ENCODE measurements at regions of chr5 and their contacts with region 1.

Region 1: GRCh38 chr5:96601811-96602244 is 60.3 kb upstream of the CAST start:
- DNase-seq: peak; percentile 84
- ATAC-seq: peak; percentile 72
- H3K4me3 ChIP-seq: no peak overlapping the region
- H3K27ac ChIP-seq: no peak overlapping the region
- H3K4me1 ChIP-seq: peaks cover 9% of the 10 kb centered on the region
- H3K27me3 ChIP-seq: no peaks in the 10 kb centered on the region
- CTCF ChIP-seq: peak; percentile 75

Region 2: GRCh38 chr5:95858661-95859326 is 743.0 kb before region 1 on chr5:
- CTCF ChIA-PET with region 1: interaction called, 6 read pairs
- POLR2A ChIA-PET with region 1: no interaction called
- intact Hi-C with region 1: loop called (anchors 5 kb)
- DNase-seq: peak; percentile 93
- ATAC-seq: peak; percentile 68
- H3K4me3 ChIP-seq: peak overlapping the region; percentile 56
- H3K27ac ChIP-seq: peak overlapping the region; percentile 99
- H3K4me1 ChIP-seq: peaks cover 49% of the 10 kb centered on the region
- H3K27me3 ChIP-seq: no peaks in the 10 kb centered on the region
- CTCF ChIP-seq: peak; percentile 91

Region 3: GRCh38 chr5:96434201-96434645 is 167.6 kb before region 1 on chr5:
- CTCF ChIA-PET with region 1: no interaction called
- POLR2A ChIA-PET with region 1: no interaction called
- intact Hi-C with region 1: no loop called
- DNase-seq: peak; percentile 63
- ATAC-seq: peak; percentile 57
- H3K4me3 ChIP-seq: no peak overlapping the region
- H3K27ac ChIP-seq: no peak overlapping the region
- H3K4me1 ChIP-seq: no peaks in the 10 kb centered on the region
- H3K27me3 ChIP-seq: no peaks in the 10 kb centered on the region
- CTCF ChIP-seq: 0 out of 2 replicates have a peak, but pooled peaks have one; percentile 14

Region 4: DNA sequence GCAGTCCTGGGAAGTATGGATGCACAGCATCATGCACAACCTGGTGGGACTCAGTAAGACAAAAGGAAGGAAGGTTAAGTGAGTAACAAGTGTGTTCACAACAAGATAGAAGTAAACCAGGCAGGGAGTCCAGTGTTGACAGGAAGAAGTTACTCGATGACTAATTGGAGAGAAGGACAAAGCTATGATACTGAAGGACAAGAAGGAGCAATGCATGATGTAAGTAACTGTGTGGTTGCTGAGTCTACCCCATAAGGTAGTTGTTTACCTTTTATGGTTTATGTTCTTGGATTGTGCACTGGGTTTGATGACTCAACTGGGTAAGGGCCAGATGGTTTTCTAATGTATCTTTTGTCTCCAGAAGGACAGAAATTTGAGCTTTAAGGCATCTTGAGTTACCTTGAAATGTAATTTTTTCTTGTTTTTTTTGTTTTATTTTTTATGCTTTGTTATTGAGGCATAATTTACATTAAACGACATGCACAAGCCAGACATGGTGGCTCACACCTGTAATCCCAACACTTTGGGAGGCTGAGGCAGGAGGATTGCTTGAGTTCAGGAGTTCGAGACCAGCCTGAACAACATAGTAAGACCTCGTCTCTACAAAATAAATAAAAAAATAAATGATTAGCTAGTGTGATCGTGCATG is 28.8 kb before region 1 on chr5:
- CTCF ChIA-PET with region 1: no interaction called
- POLR2A ChIA-PET with region 1: no interaction called
- intact Hi-C with region 1: no loop called
- DNase-seq: peak; percentile 93
- ATAC-seq: peak; percentile 100
- H3K4me3 ChIP-seq: no peak overlapping the region
- H3K27ac ChIP-seq: peak overlapping the region; percentile 80
- H3K4me1 ChIP-seq: peaks cover 11% of the 10 kb centered on the region
- H3K27me3 ChIP-seq: no peaks in the 10 kb centered on the region
- CTCF ChIP-seq: no peak

Region 5: GRCh38 chr5:97094579-97095317 is 492.9 kb after region 1 on chr5:
- CTCF ChIA-PET with region 1: no interaction called
- POLR2A ChIA-PET with region 1: no interaction called
- intact Hi-C with region 1: no loop called
- DNase-seq: no peak
- ATAC-seq: no peak
- H3K4me3 ChIP-seq: no peak overlapping the region
- H3K27ac ChIP-seq: no peak overlapping the region
- H3K4me1 ChIP-seq: no peaks in the 10 kb centered on the region
- H3K27me3 ChIP-seq: peaks cover 27% of the 10 kb centered on the region
- CTCF ChIP-seq: no peak